ENCODE measurements at regions of chr20 and their contacts with region 1.

Region 1: GRCh38 chr20:37990571-37991151 is 42.6 kb downstream of the TTI1 start:
- DNase-seq: peak; percentile 98
- ATAC-seq: peak; percentile 88
- H3K4me3 ChIP-seq: no peak overlapping the region
- H3K27ac ChIP-seq: peak overlapping the region; percentile 94
- H3K4me1 ChIP-seq: peaks cover 91% of the 10 kb centered on the region
- H3K27me3 ChIP-seq: no peaks in the 10 kb centered on the region
- CTCF ChIP-seq: no peak

Region 2: DNA sequence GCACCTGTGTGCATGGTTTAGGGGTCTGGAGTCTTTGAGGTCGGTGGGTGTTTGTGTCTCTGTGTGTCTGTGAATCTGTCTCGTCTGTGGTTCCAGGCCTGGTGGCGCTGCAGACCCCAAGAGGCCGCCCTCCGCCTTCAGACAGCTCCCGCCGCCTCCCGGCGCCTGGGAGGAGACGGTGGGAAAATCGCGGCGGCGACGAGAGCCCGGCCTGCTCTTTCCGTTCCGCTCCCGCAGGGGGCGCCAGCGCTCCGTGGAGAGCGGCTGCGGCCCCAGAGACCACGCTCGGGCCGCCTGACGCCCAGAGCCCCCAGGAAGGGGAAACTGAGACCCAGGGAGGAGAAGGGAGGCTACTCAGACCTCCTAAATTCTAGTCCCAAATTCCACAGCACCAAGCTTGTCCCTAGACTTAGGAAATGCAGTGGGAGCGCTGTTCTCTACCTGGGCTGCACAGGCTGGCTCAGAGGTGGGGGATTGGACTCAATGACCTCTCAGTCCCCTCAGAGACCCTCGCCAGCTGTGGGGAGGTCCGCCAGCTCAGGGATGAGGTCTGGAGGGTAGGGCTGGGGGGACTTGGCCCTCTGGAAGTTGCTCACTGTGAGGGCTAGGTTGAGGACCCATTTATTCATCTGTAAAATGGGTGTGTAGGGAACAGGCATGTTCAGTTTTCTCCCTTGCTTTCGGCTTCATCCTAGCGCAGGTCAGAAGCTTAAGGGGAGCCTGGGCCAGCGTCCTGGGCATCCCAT is 426.1 kb before region 1 on chr20:
- CTCF ChIA-PET with region 1: interaction called, 3 read pairs
- POLR2A ChIA-PET with region 1: no interaction called
- intact Hi-C with region 1: loop called (anchors 5 kb)
- DNase-seq: peak; percentile 70
- ATAC-seq: peak; percentile 80
- H3K4me3 ChIP-seq: peak overlapping the region; percentile 57
- H3K27ac ChIP-seq: no peak overlapping the region
- H3K4me1 ChIP-seq: peaks cover 10% of the 10 kb centered on the region; the same call in 1 of the 2 replicates
- H3K27me3 ChIP-seq: peaks cover 13% of the 10 kb centered on the region; the same call in 1 of the 2 replicates
- CTCF ChIP-seq: peak; percentile 96

Region 3: GRCh38 chr20:37943501-37944455 is 46.9 kb before region 1 on chr20:
- CTCF ChIA-PET with region 1: interaction called, 14 read pairs
- POLR2A ChIA-PET with region 1: no interaction called
- intact Hi-C with region 1: no loop called
- DNase-seq: no peak
- ATAC-seq: no peak
- H3K4me3 ChIP-seq: no peak overlapping the region
- H3K27ac ChIP-seq: no peak overlapping the region
- H3K4me1 ChIP-seq: no peaks in the 10 kb centered on the region
- H3K27me3 ChIP-seq: no peaks in the 10 kb centered on the region
- CTCF ChIP-seq: peak; percentile 21; the same call in 1 of the 2 replicates

Region 4: DNA sequence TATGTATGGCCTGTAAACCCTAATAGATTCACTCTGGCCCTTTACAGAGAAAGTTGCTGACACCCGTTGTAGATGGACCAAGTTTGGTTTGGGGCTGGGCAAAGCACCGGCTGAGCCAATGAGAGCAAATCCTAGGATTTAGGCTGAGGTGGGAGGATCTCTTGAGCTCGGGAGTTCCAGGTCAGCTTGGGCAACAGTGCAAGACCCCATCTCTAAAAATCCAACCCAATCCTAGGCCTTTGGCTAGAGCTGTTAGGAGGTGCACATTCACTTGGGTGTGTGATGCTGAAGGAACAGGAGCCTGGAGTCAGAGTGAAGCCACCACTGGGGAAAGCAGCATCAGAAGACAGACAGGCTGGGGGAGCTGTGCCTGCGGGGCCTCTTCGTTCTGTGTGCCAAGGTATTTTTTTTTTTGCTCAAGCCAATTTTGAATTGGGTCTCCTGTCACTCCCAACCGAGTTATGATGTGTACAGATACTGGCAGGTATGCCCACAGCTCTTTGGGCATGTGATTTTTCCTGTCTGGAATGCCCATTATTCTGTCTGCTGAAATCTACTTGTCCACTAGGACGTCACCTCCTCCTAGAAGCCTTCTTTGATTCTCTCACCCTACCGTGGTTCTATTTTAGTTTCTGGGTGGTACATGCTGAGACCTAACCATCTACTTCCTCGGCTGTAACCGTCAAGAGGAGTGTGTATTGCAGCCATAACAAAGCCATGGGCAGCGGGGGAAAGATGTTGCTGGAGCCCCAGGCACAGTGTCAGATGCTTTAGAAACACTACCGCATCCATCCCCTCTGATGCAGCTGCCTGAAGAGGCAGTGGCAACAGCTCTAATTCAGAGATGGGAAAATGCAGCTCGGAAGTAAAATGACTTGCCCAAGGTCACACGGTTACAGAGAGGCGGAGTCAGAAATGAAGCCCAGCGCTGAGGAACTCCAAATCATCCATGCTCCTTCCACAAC is 11.4 kb before region 1 on chr20:
- CTCF ChIA-PET with region 1: interaction called, 10 read pairs
- POLR2A ChIA-PET with region 1: no interaction called
- intact Hi-C with region 1: no loop called
- DNase-seq: no peak
- ATAC-seq: no peak
- H3K4me3 ChIP-seq: no peak overlapping the region
- H3K27ac ChIP-seq: no peak overlapping the region
- H3K4me1 ChIP-seq: no peaks in the 10 kb centered on the region
- H3K27me3 ChIP-seq: no peaks in the 10 kb centered on the region
- CTCF ChIP-seq: no peak

Region 5: GRCh38 chr20:38043512-38044300 is 53.0 kb after region 1 on chr20:
- CTCF ChIA-PET with region 1: interaction called, 18 read pairs
- POLR2A ChIA-PET with region 1: interaction called, 6 read pairs
- intact Hi-C with region 1: loop called (anchors 1 kb)
- DNase-seq: peak; percentile 97
- ATAC-seq: peak; percentile 99
- H3K4me3 ChIP-seq: peak overlapping the region; percentile 57
- H3K27ac ChIP-seq: peak overlapping the region; percentile 97
- H3K4me1 ChIP-seq: peaks cover 42% of the 10 kb centered on the region
- H3K27me3 ChIP-seq: no peaks in the 10 kb centered on the region
- CTCF ChIP-seq: peak; percentile 33; the same call in 1 of the 2 replicates

Region 6: DNA sequence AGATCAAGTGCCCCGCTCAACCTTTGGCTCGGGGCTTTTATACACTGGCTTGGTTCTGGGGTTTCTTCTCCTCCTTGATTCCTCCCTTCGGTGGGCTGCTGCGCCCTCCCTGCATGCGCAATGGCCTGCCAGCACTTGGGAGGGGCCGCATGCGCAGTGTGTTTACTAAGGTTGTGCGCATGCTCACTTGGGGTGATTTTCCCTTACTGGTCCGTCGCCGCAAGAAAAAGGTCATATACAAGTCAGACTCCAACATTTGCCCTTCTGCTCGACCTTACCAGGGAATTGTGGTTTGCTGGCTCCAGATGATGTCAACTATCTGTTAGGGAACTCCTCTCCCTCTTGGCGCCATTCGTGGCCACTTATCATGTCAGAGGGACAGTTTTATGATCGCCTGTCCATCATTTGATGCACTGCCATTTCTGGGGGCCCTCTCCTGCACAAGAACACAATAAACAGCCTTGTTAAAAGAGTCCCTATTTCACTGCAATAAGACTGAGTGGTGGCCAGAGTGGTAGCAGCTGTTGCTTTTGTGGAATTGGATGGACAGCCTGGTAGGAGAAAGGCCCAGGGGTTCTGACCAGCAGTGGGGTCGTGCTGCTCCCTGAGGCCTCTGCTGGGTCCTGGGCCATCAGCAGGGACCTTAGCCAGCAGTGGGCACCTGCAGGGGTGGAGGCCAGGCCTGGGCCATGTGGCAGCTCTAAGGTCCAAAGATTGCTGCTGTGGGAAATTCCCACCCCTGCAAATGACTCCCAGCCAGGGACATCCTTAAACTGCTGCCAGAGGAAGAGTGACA is 352.8 kb after region 1 on chr20:
- CTCF ChIA-PET with region 1: no interaction called
- POLR2A ChIA-PET with region 1: no interaction called
- intact Hi-C with region 1: no loop called
- DNase-seq: no peak
- ATAC-seq: no peak
- H3K4me3 ChIP-seq: no peak overlapping the region
- H3K27ac ChIP-seq: no peak overlapping the region
- H3K4me1 ChIP-seq: no peaks in the 10 kb centered on the region
- H3K27me3 ChIP-seq: no peaks in the 10 kb centered on the region
- CTCF ChIP-seq: no peak